Stomach (tissue), 19 donors: ENCODE measurements at regions of chr19 and their contacts with region 1.

Region 1: DNA sequence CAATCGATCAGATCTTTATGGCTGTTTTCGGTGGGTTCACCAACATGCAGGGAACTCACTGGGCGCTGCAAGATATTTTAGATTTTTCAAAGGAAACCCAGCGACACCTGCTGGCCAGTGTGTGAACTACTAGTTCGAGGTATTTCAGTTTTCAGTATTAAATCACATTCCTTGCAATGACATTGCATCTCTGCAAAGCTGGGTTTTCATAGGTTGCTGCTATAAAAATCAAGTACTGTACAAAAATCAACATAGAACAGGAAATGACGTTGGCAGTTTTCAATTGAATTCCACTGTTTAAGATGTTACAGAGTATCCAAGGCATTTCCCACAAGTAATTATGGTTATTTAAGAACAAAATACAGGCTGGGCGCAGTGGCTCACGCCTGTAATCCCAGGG is 17.6 kb downstream of the LIG1 start:
- DNase-seq: peak; percentile 59 to 75
- H3K4me3 ChIP-seq: no peak overlapping the region
- H3K27ac ChIP-seq: no peak overlapping the region
- H3K4me1 ChIP-seq: peaks cover 0 to 8% (median 1%) of the 10 kb centered on the region in 4 donors
- H3K27me3 ChIP-seq: no peaks in the 10 kb centered on the region
- CTCF ChIP-seq: peak in 5 of 7 experiments; percentile 59 to 89 (median 81)
- EP300 ChIP-seq: no peak
- POLR2A ChIP-seq: no peak

Region 2: DNA sequence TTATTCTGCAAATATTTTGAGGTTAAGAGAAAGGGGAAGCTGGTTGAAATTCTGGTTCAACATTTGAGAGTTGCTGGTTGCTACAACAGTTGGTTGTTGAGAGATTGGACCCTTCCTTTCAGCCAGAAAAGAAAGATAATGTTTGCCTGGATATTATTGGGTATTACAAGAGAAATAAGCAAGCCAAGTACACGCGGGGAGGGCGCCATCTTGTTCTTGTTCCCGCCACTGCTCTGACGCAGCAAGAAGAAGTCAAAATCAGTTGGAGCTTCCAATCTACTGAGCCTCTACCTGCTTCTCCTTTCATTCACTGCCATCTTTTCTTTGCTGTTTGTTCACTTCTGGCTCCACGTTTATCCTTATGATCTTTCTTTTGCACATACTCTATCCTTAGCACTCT is 179.0 kb before region 1 on chr19:
- intact Hi-C with region 1: loop called (anchors 10 kb)
- DNase-seq: no peak
- H3K4me3 ChIP-seq: no peak overlapping the region
- H3K27ac ChIP-seq: no peak overlapping the region
- H3K4me1 ChIP-seq: no peaks in the 10 kb centered on the region
- H3K27me3 ChIP-seq: peaks cover 0 to 40% (median 0%) of the 10 kb centered on the region in 3 donors
- CTCF ChIP-seq: no peak
- EP300 ChIP-seq: no peak
- POLR2A ChIP-seq: no peak

Region 3: DNA sequence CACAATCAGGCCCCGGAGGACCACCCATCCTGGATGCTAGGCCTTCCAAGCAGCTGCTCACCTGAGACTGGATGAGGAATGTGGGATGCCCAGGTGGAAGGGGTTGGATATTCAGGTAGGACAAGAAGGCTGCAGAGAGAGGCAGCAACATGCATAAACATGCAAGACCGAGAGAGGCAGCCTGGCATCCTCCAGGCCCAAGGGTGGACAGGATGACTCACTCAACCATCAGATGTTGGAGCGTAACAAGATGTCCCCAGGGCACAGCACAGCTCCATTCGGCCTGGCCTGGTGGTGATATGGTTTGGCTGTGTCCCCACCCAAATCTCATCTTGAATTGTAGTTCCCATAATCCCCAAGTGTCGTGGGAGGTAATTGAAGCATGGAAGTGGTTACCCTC is 98.7 kb before region 1 on chr19:
- intact Hi-C with region 1: no loop called
- DNase-seq: no peak
- H3K4me3 ChIP-seq: no peak overlapping the region
- H3K27ac ChIP-seq: no peak overlapping the region
- H3K4me1 ChIP-seq: no peaks in the 10 kb centered on the region
- H3K27me3 ChIP-seq: no peaks in the 10 kb centered on the region
- CTCF ChIP-seq: no peak
- EP300 ChIP-seq: no peak
- POLR2A ChIP-seq: no peak

Region 4: GRCh38 chr19:48110350-48110966 is 42.1 kb before region 1 on chr19 and contains the start of gene PLA2G4C:
- intact Hi-C with region 1: loop called (anchors 5 kb)
- DNase-seq: peak; percentile 89 to 95
- H3K4me3 ChIP-seq: peak within 1 kb of the TSS; percentile 41 to 55 (median 50)
- H3K27ac ChIP-seq: peak within 1 kb of the TSS; percentile 87 to 93 (median 90)
- H3K4me1 ChIP-seq: peaks cover 0 to 38% (median 27%) of the 10 kb centered on the region in 4 donors
- H3K27me3 ChIP-seq: no peaks in the 10 kb centered on the region
- CTCF ChIP-seq: no peak
- EP300 ChIP-seq: no peak
- POLR2A ChIP-seq: no peak
- total RNA-seq, gene PLA2G4C: 1.4 to 90.2 (median 6.2) TPM